Psoas muscle (tissue), 8 donors: ENCODE measurements at regions of chr15 and their contacts with region 1.

Region 1: GRCh38 chr15:56496635-56497034 is 31.7 kb upstream of the MNS1 start:
- DNase-seq: no peak
- ATAC-seq: peak; percentile 73 to 86 (median 77)
- H3K4me3 ChIP-seq: no peak overlapping the region
- H3K27ac ChIP-seq: no peak overlapping the region
- H3K4me1 ChIP-seq: no peaks in the 10 kb centered on the region
- H3K27me3 ChIP-seq: no peaks in the 10 kb centered on the region
- CTCF ChIP-seq: peak; percentile 72

Region 2: DNA sequence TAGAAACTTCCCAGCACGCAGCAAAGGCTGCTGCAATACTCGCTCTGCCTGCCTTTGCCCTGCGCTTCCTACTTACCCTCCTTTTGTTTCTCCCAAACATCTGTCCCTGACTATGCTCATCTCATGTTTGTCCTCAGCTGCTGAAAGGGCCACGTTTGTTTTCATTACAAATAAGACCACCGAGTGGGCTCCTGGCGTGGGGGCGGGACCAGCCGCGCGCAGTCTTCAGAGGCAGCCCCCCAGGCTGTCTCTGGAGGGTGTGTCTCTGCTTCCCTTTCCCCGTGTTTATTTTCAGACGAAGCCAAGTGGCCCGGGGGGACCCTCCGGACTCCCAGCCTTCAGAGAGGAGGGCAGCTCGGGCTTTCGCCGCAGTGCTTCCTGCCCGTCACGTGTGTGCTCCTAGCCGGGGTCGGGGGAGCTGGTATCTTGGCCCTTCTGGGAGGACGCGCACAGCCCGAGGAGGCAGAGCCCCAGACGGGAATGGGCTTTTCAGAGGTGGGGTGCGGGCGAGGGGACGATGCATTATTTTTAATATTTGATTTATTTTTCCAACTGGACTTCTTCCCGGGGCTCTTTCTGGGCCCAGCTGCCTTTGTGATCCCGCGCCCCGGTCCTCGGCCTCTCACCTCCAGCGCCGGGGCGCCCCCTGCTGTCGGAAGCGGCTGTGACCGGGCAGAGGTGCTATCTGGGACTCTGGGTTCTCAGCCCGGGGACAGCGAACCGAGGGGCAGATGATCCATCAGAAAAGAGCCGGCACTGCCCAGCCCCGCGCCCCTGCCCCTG is 809.7 kb after region 1 on chr15:
- intact Hi-C with region 1: loop called in 1 of 2 experiments (anchors 2 kb)
- DNase-seq: peak; percentile 87 to 94
- ATAC-seq: peak; percentile 86 to 97 (median 90)
- H3K4me3 ChIP-seq: peak overlapping the region; percentile 78
- H3K27ac ChIP-seq: no peak overlapping the region
- H3K4me1 ChIP-seq: peaks cover 5% of the 10 kb centered on the region
- H3K27me3 ChIP-seq: no peaks in the 10 kb centered on the region
- CTCF ChIP-seq: peak; percentile 90